Activated B cell treated with CpG ODN at 0.5 μM for 24 hours (primary cell): ENCODE measurements at regions of chr14 and their contacts with region 1.

Region 1: DNA sequence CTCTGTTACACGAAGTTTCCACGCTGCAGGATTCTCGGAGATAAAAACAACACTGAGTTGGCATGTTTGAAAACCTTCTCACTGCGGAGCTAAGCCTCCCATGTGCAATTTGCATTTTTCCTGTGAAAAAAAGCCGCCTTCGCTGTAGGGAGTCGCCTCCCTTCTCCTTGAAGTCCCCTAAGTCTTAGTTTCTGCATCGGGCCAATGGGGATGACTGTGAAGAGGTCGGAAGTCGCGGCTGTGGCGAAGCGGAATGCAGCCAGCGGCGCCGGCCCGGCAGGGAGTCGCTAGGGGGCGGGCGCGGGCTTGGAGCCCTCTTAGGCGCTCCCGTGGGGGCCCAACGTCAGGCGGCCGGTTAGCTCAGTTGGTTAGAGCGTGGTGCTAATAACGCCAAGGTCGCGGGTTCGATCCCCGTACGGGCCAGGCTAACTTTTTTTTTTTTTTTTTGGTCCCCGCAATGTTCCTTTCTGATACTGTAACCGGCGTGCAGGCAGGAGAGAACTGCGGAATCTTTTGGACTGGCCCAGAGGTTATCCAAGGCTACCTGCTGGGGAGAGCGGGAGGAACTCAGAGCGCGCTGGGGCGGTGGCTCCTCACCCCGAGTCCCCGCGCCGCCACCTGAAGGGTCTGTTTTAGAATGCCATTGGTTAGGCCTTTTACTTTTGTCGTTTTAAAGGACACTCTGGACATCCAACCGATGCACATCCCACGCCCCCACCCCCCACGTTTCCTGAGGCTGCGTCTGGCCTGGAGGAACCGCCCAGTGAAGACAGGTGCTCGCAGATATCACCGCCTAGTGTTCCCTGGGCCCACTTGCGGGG is 2.6 kb upstream of the ZNF839 start:
- DNase-seq: peak; percentile 99
- ATAC-seq: peak; percentile 71
- H3K4me3 Mint-ChIP-seq: peak overlapping the region; percentile 96
- H3K27ac Mint-ChIP-seq: peak overlapping the region; percentile 89
- H3K4me1 Mint-ChIP-seq: peaks cover 63% of the 10 kb centered on the region
- H3K27me3 Mint-ChIP-seq: no peaks in the 10 kb centered on the region
- CTCF ChIP-seq: no peak

Region 2: DNA sequence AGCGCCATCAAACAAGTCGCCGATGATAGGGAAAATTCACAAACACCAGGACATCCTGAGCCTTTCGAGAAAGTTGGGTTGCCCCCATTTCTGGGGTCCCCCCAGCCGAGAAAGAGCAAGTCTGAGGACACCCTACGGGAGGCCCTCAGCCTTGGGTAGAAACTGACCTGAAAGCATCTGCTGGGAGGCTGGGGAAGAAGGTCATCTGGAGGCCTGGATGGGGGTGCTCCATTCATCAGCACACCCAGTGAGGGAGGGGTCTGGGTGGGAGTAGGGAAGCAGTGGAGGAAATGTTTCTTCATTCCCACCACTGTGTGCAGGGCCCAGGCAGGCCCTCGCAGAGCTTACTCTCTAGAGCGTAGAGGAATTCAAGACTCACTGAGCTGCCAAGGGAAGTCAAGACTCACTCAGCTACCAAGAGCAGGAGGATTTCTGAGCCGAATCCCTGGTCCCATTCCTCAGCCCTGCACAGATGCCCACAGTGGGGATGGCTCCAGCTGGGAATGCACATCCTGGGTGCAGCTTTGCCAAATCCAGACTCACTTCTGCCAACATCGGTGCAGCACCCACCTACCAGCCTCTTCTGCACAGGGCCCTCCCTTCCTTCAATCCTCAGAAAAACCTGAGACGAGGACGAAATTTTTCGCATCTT is 717.6 kb before region 1 on chr14:
- CTCF ChIA-PET with region 1: no interaction called
- POLR2A ChIA-PET with region 1: interaction called, 25 read pairs
- intact Hi-C with region 1: no loop called
- DNase-seq: no peak
- ATAC-seq: no peak
- H3K4me3 Mint-ChIP-seq: no peak overlapping the region
- H3K27ac Mint-ChIP-seq: no peak overlapping the region
- H3K4me1 Mint-ChIP-seq: peaks cover 33% of the 10 kb centered on the region
- H3K27me3 Mint-ChIP-seq: no peaks in the 10 kb centered on the region
- CTCF ChIP-seq: no peak

Region 3: GRCh38 chr14:101953151-101953550 is 363.8 kb before region 1 on chr14:
- CTCF ChIA-PET with region 1: interaction called, 3 read pairs
- POLR2A ChIA-PET with region 1: interaction called, 11 read pairs
- intact Hi-C with region 1: no loop called
- DNase-seq: no peak
- ATAC-seq: no peak
- H3K4me3 Mint-ChIP-seq: no peak overlapping the region
- H3K27ac Mint-ChIP-seq: no peak overlapping the region
- H3K4me1 Mint-ChIP-seq: peaks cover 14% of the 10 kb centered on the region
- H3K27me3 Mint-ChIP-seq: no peaks in the 10 kb centered on the region
- CTCF ChIP-seq: no peak

Region 4: GRCh38 chr14:102063091-102063802 is 253.7 kb before region 1 on chr14:
- CTCF ChIA-PET with region 1: interaction called, 11 read pairs
- POLR2A ChIA-PET with region 1: no interaction called
- intact Hi-C with region 1: loop called (anchors 1 kb)
- DNase-seq: peak; percentile 46
- ATAC-seq: peak; percentile 97
- H3K4me3 Mint-ChIP-seq: no peak overlapping the region
- H3K27ac Mint-ChIP-seq: no peak overlapping the region
- H3K4me1 Mint-ChIP-seq: peaks cover 5% of the 10 kb centered on the region
- H3K27me3 Mint-ChIP-seq: no peaks in the 10 kb centered on the region
- CTCF ChIP-seq: no peak

Region 5: GRCh38 chr14:102235275-102235897 is 81.6 kb before region 1 on chr14:
- CTCF ChIA-PET with region 1: interaction called, 12 read pairs
- POLR2A ChIA-PET with region 1: no interaction called
- intact Hi-C with region 1: loop called (anchors 1 kb)
- DNase-seq: peak; percentile 52
- ATAC-seq: peak; percentile 99
- H3K4me3 Mint-ChIP-seq: no peak overlapping the region
- H3K27ac Mint-ChIP-seq: no peak overlapping the region
- H3K4me1 Mint-ChIP-seq: no peaks in the 10 kb centered on the region
- H3K27me3 Mint-ChIP-seq: no peaks in the 10 kb centered on the region
- CTCF ChIP-seq: peak; percentile 37

Region 6: GRCh38 chr14:102375119-102375518 is 58.2 kb after region 1 on chr14:
- CTCF ChIA-PET with region 1: no interaction called
- POLR2A ChIA-PET with region 1: no interaction called
- intact Hi-C with region 1: no loop called
- DNase-seq: no peak
- ATAC-seq: no peak
- H3K4me3 Mint-ChIP-seq: no peak overlapping the region
- H3K27ac Mint-ChIP-seq: no peak overlapping the region
- H3K4me1 Mint-ChIP-seq: peaks cover 4% of the 10 kb centered on the region
- H3K27me3 Mint-ChIP-seq: no peaks in the 10 kb centered on the region
- CTCF ChIP-seq: no peak

Region 7: DNA sequence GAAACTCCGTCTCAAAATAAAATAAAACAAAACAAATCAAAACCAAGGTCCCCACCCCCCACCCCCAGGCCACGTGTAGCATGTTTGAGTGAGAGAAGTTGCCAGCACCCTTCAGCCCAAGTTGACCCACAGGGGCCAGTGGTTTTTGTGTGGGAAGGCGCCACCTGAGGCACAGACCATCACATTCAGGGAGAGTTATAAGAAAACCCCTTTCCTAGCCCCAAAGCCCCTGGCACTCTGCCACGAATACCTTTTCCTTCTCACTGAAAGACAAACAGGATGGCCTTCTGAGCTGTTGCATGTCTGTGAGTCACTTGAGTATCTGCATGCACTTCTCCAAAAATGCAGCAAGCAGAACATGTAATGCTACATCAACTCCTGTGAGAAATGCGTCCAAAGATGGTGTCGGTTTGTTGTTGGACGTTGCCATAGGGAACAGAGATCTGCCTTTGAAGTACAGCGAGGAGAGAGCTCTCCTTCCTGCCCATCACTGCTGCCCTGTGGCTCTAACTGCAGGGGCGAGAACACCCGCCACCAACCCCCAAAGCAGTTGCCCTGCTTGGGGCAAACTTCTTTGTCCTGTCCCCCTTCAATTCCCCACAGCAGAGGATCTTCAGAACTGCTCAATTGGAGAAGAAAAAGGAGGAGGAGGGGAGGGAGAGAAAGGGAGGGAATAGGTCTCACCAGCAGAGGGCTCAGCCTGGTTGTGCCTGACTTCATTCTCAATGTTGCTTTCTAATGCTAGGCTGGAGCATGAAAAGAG is 457.6 kb after region 1 on chr14:
- CTCF ChIA-PET with region 1: no interaction called
- POLR2A ChIA-PET with region 1: interaction called, 7 read pairs
- intact Hi-C with region 1: loop called (anchors 10 kb)
- DNase-seq: peak; percentile 64
- ATAC-seq: peak; percentile 53
- H3K4me3 Mint-ChIP-seq: peak overlapping the region; percentile 70
- H3K27ac Mint-ChIP-seq: peak overlapping the region; percentile 96
- H3K4me1 Mint-ChIP-seq: peaks cover 76% of the 10 kb centered on the region
- H3K27me3 Mint-ChIP-seq: no peaks in the 10 kb centered on the region
- CTCF ChIP-seq: no peak